Prostate gland (tissue), 2 donors: ENCODE measurements at regions of chr17 and their contacts with region 1.

Region 1: GRCh38 chr17:46782250-46782953 is 36.1 kb downstream of the WNT3 start:
- DNase-seq: no peak
- H3K4me3 ChIP-seq: no peak overlapping the region
- H3K27ac ChIP-seq: no peak overlapping the region
- H3K4me1 ChIP-seq: no peaks in the 10 kb centered on the region
- H3K27me3 ChIP-seq: no peaks in the 10 kb centered on the region
- CTCF ChIP-seq: peak in 3 of 4 experiments; percentile 36 to 72 (median 56)
- POLR2A ChIP-seq: no peak

Region 2: GRCh38 chr17:46727572-46728348 is 54.6 kb before region 1 on chr17:
- intact Hi-C with region 1: loop called (anchors 10 kb)
- DNase-seq: no peak
- H3K4me3 ChIP-seq: no peak overlapping the region
- H3K27ac ChIP-seq: no peak overlapping the region
- H3K4me1 ChIP-seq: no peaks in the 10 kb centered on the region
- H3K27me3 ChIP-seq: no peaks in the 10 kb centered on the region
- CTCF ChIP-seq: no peak
- POLR2A ChIP-seq: no peak